Endothelial cell of umbilical vein (primary cell): ENCODE measurements at regions of chr19 and their contacts with region 1.

Region 1: GRCh38 chr19:5577785-5578493 is 10.2 kb upstream of the TINCR start:
- DNase-seq: peak; percentile 38
- H3K4me3 ChIP-seq: no peak overlapping the region
- H3K27ac ChIP-seq: no peak overlapping the region
- H3K4me1 ChIP-seq: no peaks in the 10 kb centered on the region
- H3K27me3 ChIP-seq: no peaks in the 10 kb centered on the region
- CTCF ChIP-seq: peak; percentile 94 to 99
- POLR2A ChIP-seq: no peak

Region 2: DNA sequence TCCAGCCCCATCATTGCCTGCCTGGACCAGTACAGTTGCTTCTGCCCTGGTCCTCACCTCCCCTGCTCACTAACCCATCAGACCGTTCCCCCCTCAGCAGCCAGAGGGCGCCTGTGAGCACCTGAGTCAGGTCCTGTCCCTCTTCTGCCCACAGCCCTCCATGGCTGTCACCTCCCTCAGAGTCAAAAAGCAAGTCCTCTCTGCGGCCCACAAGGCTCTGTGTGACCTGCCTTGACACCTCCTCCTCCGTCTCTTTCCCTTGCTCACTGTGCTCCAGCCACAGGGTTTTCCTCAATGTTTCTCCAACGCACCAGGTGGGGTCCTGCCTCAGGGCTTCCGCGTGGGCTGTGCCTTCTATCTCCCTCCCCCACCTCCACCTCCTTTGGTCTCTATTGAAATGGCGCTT is 208.0 kb before region 1 on chr19:
- CTCF ChIA-PET with region 1: interaction called, 3 read pairs
- POLR2A ChIA-PET with region 1: no interaction called
- dilution Hi-C with region 1: no loop called
- intact Hi-C with region 1: loop called (anchors 1 kb)
- DNase-seq: peak; percentile 35
- H3K4me3 ChIP-seq: no peak overlapping the region
- H3K27ac ChIP-seq: no peak overlapping the region
- H3K4me1 ChIP-seq: no peaks in the 10 kb centered on the region
- H3K27me3 ChIP-seq: no peaks in the 10 kb centered on the region
- CTCF ChIP-seq: peak; percentile 56 to 76
- POLR2A ChIP-seq: no peak

Region 3: DNA sequence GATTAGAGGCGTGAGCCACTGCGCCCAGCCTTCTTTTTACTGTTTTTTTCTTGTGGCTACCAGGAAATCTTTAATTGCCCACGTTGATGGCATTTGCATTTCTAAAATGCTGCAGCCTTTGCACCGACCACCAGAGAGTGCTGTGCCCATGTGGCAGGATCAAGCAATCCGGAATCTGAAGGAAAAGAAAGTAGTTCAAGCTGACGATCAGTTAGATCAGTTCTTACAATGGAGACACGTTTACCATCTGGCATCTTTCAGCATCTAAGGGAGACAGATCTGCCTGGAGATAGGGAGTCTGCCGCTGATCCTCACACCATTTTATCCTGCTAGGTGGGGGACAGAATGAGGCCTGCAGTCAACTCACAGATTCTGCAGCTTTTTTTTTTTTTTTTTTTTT is 30.1 kb before region 1 on chr19:
- CTCF ChIA-PET with region 1: interaction called, 21 read pairs
- POLR2A ChIA-PET with region 1: no interaction called
- dilution Hi-C with region 1: no loop called
- intact Hi-C with region 1: loop called (anchors 1 kb)
- DNase-seq: peak; percentile 9
- H3K4me3 ChIP-seq: no peak overlapping the region
- H3K27ac ChIP-seq: no peak overlapping the region
- H3K4me1 ChIP-seq: no peaks in the 10 kb centered on the region
- H3K27me3 ChIP-seq: no peaks in the 10 kb centered on the region
- CTCF ChIP-seq: peak; percentile 33 to 46
- POLR2A ChIP-seq: no peak

Region 4: DNA sequence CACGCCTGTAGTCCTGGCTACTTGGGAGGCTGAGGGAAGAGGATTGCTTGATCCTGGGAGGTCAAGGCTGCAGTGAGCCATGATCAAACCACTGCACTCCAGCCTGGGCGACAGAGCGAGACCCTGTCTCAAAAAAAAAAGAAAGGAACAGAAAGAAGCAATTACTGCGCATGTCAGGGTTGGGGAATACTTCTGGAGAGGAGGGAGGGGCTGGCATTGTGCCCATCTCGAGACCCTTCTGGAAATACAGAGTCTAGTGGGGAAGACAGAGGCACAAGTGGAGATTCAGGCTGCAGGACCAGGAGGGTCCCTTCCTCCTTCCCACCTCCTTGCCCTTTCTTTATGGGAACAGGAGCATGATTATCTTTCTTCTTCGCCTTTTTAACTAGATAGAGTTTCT is 175.8 kb after region 1 on chr19:
- CTCF ChIA-PET with region 1: no interaction called
- POLR2A ChIA-PET with region 1: no interaction called
- dilution Hi-C with region 1: no loop called
- intact Hi-C with region 1: no loop called
- DNase-seq: no peak
- H3K4me3 ChIP-seq: no peak overlapping the region
- H3K27ac ChIP-seq: no peak overlapping the region
- H3K4me1 ChIP-seq: no peaks in the 10 kb centered on the region
- H3K27me3 ChIP-seq: no peaks in the 10 kb centered on the region
- CTCF ChIP-seq: no peak
- POLR2A ChIP-seq: no peak